CD8-positive, alpha-beta T cell (primary cell): ENCODE measurements at regions of chr20 and their contacts with region 1.

Region 1: GRCh38 chr20:56411759-56412472 is at the start of gene CASS4:
- DNase-seq: peak in 6 of 9 experiments; percentile 39 to 82 (median 61)
- ATAC-seq: peak; percentile 80
- H3K4me3 ChIP-seq: peak within 1 kb of the TSS; percentile 58 to 74
- H3K4me3 Mint-ChIP-seq: peak within 1 kb of the TSS; percentile 93
- H3K27ac ChIP-seq: peak within 1 kb of the TSS; percentile 71 to 80
- H3K27ac Mint-ChIP-seq: peak within 1 kb of the TSS; percentile 98
- H3K4me1 ChIP-seq: peaks cover 56% of the 10 kb centered on the region
- H3K4me1 Mint-ChIP-seq: peaks cover 50% of the 10 kb centered on the region
- H3K27me3 ChIP-seq: no peaks in the 10 kb centered on the region
- H3K27me3 Mint-ChIP-seq: no peaks in the 10 kb centered on the region
- CTCF ChIP-seq: no peak
- total RNA-seq, gene CASS4: 23.5 to 26.0 TPM

Region 2: GRCh38 chr20:56400090-56400542 is 11.8 kb before region 1 on chr20:
- CTCF ChIA-PET with region 1: interaction called, 9 read pairs
- POLR2A ChIA-PET with region 1: interaction called, 7 read pairs
- intact Hi-C with region 1: loop called in 1 of 2 experiments (anchors 1 kb)
- DNase-seq: peak in 8 of 9 experiments; percentile 42 to 87 (median 69)
- ATAC-seq: peak; percentile 90
- H3K4me3 ChIP-seq: no peak overlapping the region
- H3K4me3 Mint-ChIP-seq: no peak overlapping the region
- H3K27ac ChIP-seq: peak overlapping the region in 1 of 2 experiments; percentile 16
- H3K27ac Mint-ChIP-seq: no peak overlapping the region
- H3K4me1 ChIP-seq: peaks cover 11% of the 10 kb centered on the region
- H3K4me1 Mint-ChIP-seq: peaks cover 21% of the 10 kb centered on the region
- H3K27me3 ChIP-seq: no peaks in the 10 kb centered on the region
- H3K27me3 Mint-ChIP-seq: no peaks in the 10 kb centered on the region
- CTCF ChIP-seq: peak; percentile 85

Region 3: GRCh38 chr20:56429502-56429901 is 17.6 kb after region 1 on chr20:
- CTCF ChIA-PET with region 1: interaction called, 3 read pairs
- POLR2A ChIA-PET with region 1: interaction called, 10 read pairs
- intact Hi-C with region 1: no loop called
- DNase-seq: peak in 2 of 9 experiments; percentile 23 to 48
- ATAC-seq: peak; percentile 38
- H3K4me3 ChIP-seq: peak overlapping the region; percentile 40 to 56
- H3K4me3 Mint-ChIP-seq: peak overlapping the region; percentile 87
- H3K27ac ChIP-seq: peak overlapping the region; percentile 31 to 77
- H3K27ac Mint-ChIP-seq: peak overlapping the region; percentile 94
- H3K4me1 ChIP-seq: peaks cover 46% of the 10 kb centered on the region
- H3K4me1 Mint-ChIP-seq: peaks cover 71% of the 10 kb centered on the region
- H3K27me3 ChIP-seq: no peaks in the 10 kb centered on the region
- H3K27me3 Mint-ChIP-seq: no peaks in the 10 kb centered on the region
- CTCF ChIP-seq: no peak

Region 4: DNA sequence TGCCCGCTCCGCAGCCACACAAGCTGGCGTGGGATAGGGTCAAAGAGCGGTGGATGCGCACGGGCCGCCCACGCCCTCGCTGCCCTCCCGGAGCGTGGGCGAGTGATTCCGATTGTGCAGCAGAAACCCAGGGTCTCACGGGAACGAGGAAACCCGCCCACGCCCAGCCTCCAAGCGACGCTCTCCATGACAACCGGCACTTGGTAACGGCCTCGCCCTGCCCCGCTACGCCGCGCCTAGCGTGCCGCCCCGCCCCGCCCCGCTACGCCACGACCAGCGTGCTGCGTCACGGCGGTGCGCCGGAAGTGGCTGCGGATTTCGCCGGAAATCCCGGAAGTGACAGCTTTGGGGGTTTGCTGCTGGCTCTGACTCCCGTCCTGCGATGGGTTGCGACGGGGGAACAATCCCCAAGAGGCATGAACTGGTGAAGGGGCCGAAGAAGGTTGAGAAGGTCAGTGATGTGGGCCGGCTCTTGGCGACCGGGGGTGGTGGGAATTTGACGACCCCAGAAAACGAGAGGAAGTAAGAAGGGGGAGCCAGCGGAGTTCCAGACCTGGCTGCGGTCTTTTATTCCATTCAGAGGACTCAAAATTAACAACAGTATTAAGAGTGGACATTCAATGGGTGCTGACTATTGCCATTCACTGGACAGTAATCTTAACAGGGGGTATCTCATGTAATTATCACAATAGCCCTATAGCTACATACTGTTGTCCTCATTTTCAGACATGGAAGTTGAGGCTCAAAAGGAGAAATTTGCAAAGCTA is 56.6 kb after region 1 on chr20 and contains the start of gene RTF2:
- CTCF ChIA-PET with region 1: interaction called, 9 read pairs
- POLR2A ChIA-PET with region 1: interaction called, 19 read pairs
- intact Hi-C with region 1: loop called in 1 of 2 experiments (anchors 1 kb)
- DNase-seq: peak; percentile 93 to 99 (median 97)
- ATAC-seq: peak; percentile 98
- H3K4me3 ChIP-seq: peak within 1 kb of the TSS; percentile 74 to 94
- H3K4me3 Mint-ChIP-seq: peak within 1 kb of the TSS; percentile 97
- H3K27ac ChIP-seq: peak within 1 kb of the TSS; percentile 93 to 95
- H3K27ac Mint-ChIP-seq: peak within 1 kb of the TSS; percentile 100
- H3K4me1 ChIP-seq: peaks cover 29% of the 10 kb centered on the region
- H3K4me1 Mint-ChIP-seq: peaks cover 47% of the 10 kb centered on the region
- H3K27me3 ChIP-seq: no peaks in the 10 kb centered on the region
- H3K27me3 Mint-ChIP-seq: no peaks in the 10 kb centered on the region
- CTCF ChIP-seq: no peak
- total RNA-seq, gene RTF2: 56.5 to 57.6 TPM